ENCODE measurements at regions of chr3 and their contacts with region 1.

Region 1: DNA sequence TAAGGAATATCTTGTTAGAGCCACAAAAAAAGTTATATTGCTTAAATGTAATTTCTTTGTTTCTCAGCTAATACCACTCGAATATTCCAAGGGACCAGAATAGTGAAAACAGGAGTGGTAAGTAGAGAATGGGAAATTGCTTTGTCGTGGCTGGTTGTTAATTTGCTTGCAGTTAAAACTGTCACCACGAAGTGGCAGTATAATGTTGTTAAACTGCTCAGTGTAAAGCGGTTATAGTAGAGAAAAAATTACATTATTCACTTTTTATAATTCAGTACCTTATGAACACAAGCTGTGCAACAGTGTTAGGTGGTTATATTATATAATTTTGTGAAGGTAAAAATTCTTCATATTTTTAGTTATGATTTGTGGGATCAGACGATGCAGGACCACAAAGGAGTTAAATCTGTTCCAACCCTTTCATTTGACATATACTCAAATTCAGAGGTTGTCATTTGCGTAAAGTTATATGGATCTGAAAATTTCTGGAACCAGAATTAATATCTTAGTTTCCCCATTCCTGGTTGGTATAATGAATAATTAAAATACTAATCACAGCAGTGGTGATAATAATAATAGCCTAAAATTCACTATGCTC is 171.8 kb downstream of the FEZF2 start:
- DNase-seq: no peak

Region 2: GRCh38 chr3:62312201-62312600 is 110.7 kb after region 1 on chr3:
- intact Hi-C with region 1: loop called (anchors 5 kb)
- DNase-seq: no peak

Region 3: GRCh38 chr3:62332835-62333244 is 131.3 kb after region 1 on chr3:
- intact Hi-C with region 1: no loop called
- DNase-seq: no peak

Measured in cardiac septum (tissue), 1 donor.